ENCODE measurements at regions of chr22 and their contacts with region 1.

Region 1: DNA sequence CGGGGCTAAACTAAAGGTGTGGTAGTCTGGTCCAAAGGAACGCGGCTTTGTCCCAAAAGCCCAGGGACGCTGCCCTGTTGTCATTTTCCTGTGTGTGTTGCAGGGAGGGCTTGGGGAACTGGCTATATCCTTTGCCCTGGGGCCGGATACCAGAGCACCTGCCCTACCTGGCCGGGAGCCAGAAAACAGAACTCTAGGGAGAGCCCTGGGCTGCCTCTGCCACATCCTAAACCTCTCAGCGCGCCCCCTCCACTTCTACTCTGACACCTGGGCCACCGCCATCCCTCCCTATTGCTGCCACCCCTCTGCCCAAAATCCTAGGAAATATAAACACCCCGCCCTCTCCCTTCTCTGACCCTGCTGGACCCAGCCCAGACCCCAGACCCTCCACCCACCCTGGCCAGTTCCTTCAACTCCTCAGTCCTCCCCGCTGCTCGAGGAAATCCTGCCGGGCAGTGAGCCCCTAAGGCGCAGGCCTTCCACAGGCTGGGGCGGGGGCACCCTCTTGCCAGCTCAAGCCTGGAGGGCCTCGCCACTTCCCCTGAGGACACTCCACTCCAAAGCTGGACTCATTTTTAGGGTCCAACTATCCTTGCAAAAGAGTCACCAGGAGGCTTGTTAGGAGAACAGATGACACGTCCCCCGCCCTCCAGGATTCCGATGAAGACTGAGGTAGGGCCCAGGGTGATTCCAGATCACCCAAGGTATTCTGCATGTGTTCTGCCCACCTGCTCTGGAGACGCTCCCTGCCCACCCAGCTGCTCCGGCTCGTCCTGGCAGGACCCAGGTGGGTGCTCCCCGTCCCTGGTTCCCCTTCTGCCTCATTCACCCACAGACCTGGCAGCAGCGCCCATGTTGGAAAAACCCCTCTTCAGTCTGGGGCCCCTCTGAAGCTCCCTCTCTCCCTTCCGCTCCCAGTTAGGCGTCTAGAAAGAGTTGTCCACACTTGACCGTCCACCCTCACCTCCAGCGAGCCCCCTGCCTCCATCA is 12.2 kb downstream of the KCTD17 start:
- DNase-seq: no peak
- ATAC-seq: no peak
- H3K4me3 ChIP-seq: no peak overlapping the region
- H3K27ac ChIP-seq: no peak overlapping the region
- H3K4me1 ChIP-seq: no peaks in the 10 kb centered on the region
- H3K27me3 ChIP-seq: peaks cover 0 to 34% (median 15%) of the 10 kb centered on the region in 7 donors
- CTCF ChIP-seq: no peak

Region 2: GRCh38 chr22:37021710-37022482 is 41.8 kb before region 1 on chr22:
- intact Hi-C with region 1: no loop called
- DNase-seq: no peak
- ATAC-seq: no peak
- H3K4me3 ChIP-seq: no peak overlapping the region
- H3K27ac ChIP-seq: peak overlapping the region in 6 of 10 donors; percentile 5 to 64 (median 15)
- H3K4me1 ChIP-seq: peaks cover 20 to 74% (median 57%) of the 10 kb centered on the region in 9 donors
- H3K27me3 ChIP-seq: no peaks in the 10 kb centered on the region
- CTCF ChIP-seq: peak; percentile 52 to 85 (median 66)

Region 3: DNA sequence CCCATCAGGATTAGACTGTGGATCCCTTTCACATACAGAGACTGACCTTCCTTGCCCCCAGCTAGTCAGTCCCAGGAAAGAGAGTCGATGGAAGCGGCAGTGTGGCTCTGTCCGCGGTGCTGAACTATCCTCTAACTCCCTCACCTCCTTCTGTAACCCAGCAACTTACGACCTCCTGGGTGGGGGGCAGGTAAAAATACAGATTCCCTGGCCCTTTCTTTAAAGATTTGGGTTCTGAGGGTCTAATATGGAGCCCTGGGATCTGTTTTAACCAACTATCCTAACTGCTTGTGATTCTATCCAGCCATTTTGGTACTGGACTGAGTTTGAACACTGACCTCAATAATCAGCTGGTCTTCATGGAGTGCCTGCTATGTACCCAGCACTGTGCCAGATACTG is 399.3 kb after region 1 on chr22:
- intact Hi-C with region 1: loop called in 1 of 10 experiments (anchors 10 kb)
- DNase-seq: no peak
- ATAC-seq: peak in 6 of 8 donors; percentile 25 to 60 (median 46)
- H3K4me3 ChIP-seq: no peak overlapping the region
- H3K27ac ChIP-seq: no peak overlapping the region
- H3K4me1 ChIP-seq: peaks cover 0 to 7% (median 0%) of the 10 kb centered on the region in 9 donors
- H3K27me3 ChIP-seq: peaks cover under 1 to 48% (median 17%) of the 10 kb centered on the region in 7 donors
- CTCF ChIP-seq: no peak